ENCODE measurements at regions of chr1 and their contacts with region 1.

Region 1: DNA sequence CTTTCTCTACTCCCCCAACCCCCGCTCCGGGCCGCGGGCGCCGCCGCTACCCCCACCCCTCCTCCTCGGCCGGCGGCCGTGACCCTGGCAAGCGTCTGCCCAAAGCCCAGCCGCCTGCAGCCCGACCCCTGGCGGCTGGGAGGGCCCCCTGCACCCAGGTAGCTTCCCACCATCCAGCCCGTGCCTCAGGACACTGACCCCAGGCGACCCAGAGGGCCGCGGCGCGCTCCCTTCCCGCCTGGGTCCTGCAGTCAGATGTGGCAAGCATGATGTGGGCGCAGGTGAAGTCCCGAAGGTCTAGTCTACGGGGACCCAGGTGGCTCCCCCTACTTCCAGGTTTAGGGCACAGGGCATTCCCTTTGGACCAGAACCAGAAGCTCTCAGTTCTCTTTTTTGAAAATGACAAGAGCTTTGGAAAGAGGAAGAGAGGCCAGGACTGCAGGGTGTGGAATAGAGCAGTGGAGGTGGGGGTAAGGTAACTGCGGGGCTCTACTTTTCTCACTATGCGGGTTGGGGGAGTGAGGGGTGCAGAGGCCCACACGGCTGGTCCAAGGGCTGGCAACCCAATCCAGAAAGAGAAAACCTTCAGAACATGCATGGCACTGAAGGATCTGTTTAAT is at the start of gene DENND4B:
- DNase-seq: peak; percentile 74
- ATAC-seq: peak; percentile 54
- H3K4me3 Mint-ChIP-seq: peak within 1 kb of the TSS; percentile 90
- H3K27ac Mint-ChIP-seq: peak within 1 kb of the TSS; percentile 96
- H3K4me1 Mint-ChIP-seq: peaks cover 71% of the 10 kb centered on the region
- H3K27me3 Mint-ChIP-seq: no peaks in the 10 kb centered on the region
- CTCF ChIP-seq: no peak
- total RNA-seq, gene DENND4B: 217 and 257 TPM in 2 replicates

Region 2: GRCh38 chr1:153598309-153599172 is 348.2 kb before region 1 on chr1:
- CTCF ChIA-PET with region 1: no interaction called
- POLR2A ChIA-PET with region 1: interaction called, 10 read pairs
- intact Hi-C with region 1: no loop called
- DNase-seq: peak; percentile 57
- ATAC-seq: peak; percentile 92
- H3K4me3 Mint-ChIP-seq: peak overlapping the region; percentile 73
- H3K27ac Mint-ChIP-seq: peak overlapping the region; percentile 96
- H3K4me1 Mint-ChIP-seq: peaks cover 48% of the 10 kb centered on the region
- H3K27me3 Mint-ChIP-seq: no peaks in the 10 kb centered on the region
- CTCF ChIP-seq: no peak

Region 3: GRCh38 chr1:153790966-153791647 is 155.6 kb before region 1 on chr1:
- CTCF ChIA-PET with region 1: no interaction called
- POLR2A ChIA-PET with region 1: interaction called, 21 read pairs
- intact Hi-C with region 1: no loop called
- DNase-seq: no peak
- ATAC-seq: peak; percentile 92
- H3K4me3 Mint-ChIP-seq: peak overlapping the region; percentile 71
- H3K27ac Mint-ChIP-seq: peak overlapping the region; percentile 96
- H3K4me1 Mint-ChIP-seq: peaks cover 45% of the 10 kb centered on the region
- H3K27me3 Mint-ChIP-seq: no peaks in the 10 kb centered on the region
- CTCF ChIP-seq: no peak

Region 4: GRCh38 chr1:153816283-153816889 is 130.3 kb before region 1 on chr1:
- CTCF ChIA-PET with region 1: interaction called, 20 read pairs
- POLR2A ChIA-PET with region 1: interaction called, 11 read pairs
- intact Hi-C with region 1: loop called (anchors 1 kb)
- DNase-seq: no peak
- ATAC-seq: no peak
- H3K4me3 Mint-ChIP-seq: no peak overlapping the region
- H3K27ac Mint-ChIP-seq: no peak overlapping the region
- H3K4me1 Mint-ChIP-seq: peaks cover 3% of the 10 kb centered on the region
- H3K27me3 Mint-ChIP-seq: no peaks in the 10 kb centered on the region
- CTCF ChIP-seq: no peak

Region 5: GRCh38 chr1:153880962-153881361 is 65.8 kb before region 1 on chr1:
- CTCF ChIA-PET with region 1: no interaction called
- POLR2A ChIA-PET with region 1: interaction called, 11 read pairs
- intact Hi-C with region 1: no loop called
- DNase-seq: no peak
- ATAC-seq: peak; percentile 62
- H3K4me3 Mint-ChIP-seq: no peak overlapping the region
- H3K27ac Mint-ChIP-seq: no peak overlapping the region
- H3K4me1 Mint-ChIP-seq: peaks cover 27% of the 10 kb centered on the region
- H3K27me3 Mint-ChIP-seq: no peaks in the 10 kb centered on the region
- CTCF ChIP-seq: no peak

Region 6: GRCh38 chr1:153958111-153958960 is 11.6 kb after region 1 on chr1 and contains the start of gene CRTC2:
- CTCF ChIA-PET with region 1: interaction called, 13 read pairs
- POLR2A ChIA-PET with region 1: interaction called, 234 read pairs
- intact Hi-C with region 1: loop called (anchors 1 kb)
- DNase-seq: peak; percentile 92
- ATAC-seq: peak; percentile 83
- H3K4me3 Mint-ChIP-seq: peak within 1 kb of the TSS; percentile 96
- H3K27ac Mint-ChIP-seq: peak within 1 kb of the TSS; percentile 96
- H3K4me1 Mint-ChIP-seq: peaks cover 77% of the 10 kb centered on the region
- H3K27me3 Mint-ChIP-seq: no peaks in the 10 kb centered on the region
- CTCF ChIP-seq: no peak
- total RNA-seq, gene CRTC2: 206 and 247 TPM in 2 replicates

Region 7: DNA sequence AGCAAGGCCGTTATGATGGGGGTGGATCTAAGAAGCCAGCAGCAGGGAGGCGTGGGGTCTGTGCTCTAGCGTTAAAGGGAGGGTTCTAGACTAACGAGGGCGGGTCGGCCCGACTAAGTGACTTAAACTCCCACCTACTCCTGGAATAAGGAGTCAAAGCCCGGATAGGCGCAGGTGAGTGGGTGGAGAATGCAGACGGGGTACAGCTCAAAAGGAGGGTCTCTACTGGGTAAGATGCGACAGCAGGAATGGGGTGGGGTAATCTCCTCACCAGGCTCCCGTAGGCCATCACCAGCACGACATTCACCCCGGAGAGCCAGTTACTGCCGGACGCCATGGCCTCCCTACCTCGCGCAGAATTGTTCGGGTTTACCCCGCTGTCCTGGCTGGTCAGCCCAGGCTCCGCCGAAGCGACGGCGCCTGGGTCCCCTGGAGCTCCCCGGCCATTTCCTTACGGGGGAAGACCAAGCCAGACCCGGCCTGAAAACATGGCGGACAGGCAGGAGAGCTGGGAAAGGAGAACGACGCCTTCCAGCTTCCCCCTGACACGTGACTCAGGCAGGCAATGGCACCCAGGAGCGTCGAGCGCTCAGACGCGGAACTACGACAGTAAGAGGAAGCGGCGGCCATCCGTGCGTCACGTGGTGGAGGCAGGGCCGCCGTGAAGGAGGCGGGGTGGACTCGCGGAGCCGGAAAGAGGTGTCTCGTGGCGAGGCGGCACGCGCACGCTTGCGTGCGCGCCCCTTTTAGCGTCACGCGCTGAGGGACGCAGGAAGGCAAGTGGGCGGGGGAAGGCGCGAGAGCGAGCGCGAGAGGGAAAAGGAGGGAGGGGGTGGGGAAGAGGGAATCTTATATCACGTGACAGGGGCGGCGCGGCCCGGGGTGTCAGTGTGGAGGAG is 273.6 kb after region 1 on chr1 and contains the start of gene UBAP2L:
- CTCF ChIA-PET with region 1: no interaction called
- POLR2A ChIA-PET with region 1: interaction called, 5 read pairs
- intact Hi-C with region 1: loop called (anchors 1 kb)
- DNase-seq: peak; percentile 98
- ATAC-seq: peak; percentile 84
- H3K4me3 Mint-ChIP-seq: peak within 1 kb of the TSS; percentile 99
- H3K27ac Mint-ChIP-seq: peak within 1 kb of the TSS; percentile 100
- H3K4me1 Mint-ChIP-seq: peaks cover 75% of the 10 kb centered on the region
- H3K27me3 Mint-ChIP-seq: no peaks in the 10 kb centered on the region
- CTCF ChIP-seq: no peak
- total RNA-seq, gene UBAP2L: 209 and 234 TPM in 2 replicates

Measured in activated B cell treated with CpG ODN at 0.5 μM for 24 hours (primary cell).